IMR-90 (cell line): ENCODE measurements at regions of chr19 and their contacts with region 1.

Region 1: GRCh38 chr19:50511068-50511822 is at the start of gene JOSD2:
- DNase-seq: peak; percentile 99
- ATAC-seq: peak; percentile 95
- H3K4me3 ChIP-seq: peak within 1 kb of the TSS; percentile 68
- H3K27ac ChIP-seq: peak within 1 kb of the TSS; percentile 56
- H3K4me1 ChIP-seq: peaks cover 3% of the 10 kb centered on the region
- H3K27me3 ChIP-seq: no peaks in the 10 kb centered on the region
- CTCF ChIP-seq: no peak
- POLR2A ChIP-seq: peak; percentile 55; the same call in 1 of the 2 replicates
- RAD21 ChIP-seq: no peak
- total RNA-seq, gene JOSD2: 12.2 and 15.3 TPM in 2 replicates

Region 2: DNA sequence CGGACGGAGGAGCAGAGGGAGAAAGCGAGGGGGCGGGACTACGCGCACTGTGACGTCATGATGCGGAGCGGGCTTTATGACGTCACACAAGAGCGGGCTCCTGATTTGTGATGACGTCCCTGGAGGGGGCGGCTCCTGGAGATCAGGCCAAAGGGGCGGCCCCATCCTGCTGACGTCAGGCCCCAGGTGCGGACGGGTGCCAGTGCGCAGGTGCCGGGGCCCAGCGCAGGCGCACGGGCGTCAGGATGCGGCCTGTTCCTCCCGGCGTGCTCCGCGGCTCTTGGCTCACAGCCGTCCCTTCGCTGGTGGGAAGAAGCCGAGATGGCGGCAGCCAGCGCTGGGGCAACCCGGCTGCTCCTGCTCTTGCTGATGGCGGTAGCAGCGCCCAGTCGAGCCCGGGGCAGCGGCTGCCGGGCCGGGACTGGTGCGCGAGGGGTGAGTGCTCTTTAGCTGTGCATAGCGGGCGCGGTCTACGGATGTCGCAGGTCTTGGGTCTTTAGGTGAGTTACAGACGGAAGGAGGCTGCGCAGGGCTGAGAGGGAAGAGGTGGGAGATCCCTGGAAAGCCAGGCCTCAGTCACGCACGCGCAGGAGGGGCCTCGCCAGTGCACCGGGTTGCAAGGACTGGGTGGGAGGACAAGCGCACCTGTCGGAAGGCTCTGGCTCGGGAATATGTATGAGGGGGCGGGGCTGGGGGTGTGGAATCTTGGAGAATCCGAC is 34.9 kb before region 1 on chr19 and contains the starts of genes EMC10 and GARIN5A:
- CTCF ChIA-PET with region 1: no interaction called
- POLR2A ChIA-PET with region 1: no interaction called
- dilution Hi-C with region 1: no loop called
- in situ Hi-C with region 1: no loop called
- intact Hi-C with region 1: loop called (anchors 2 kb)
- DNase-seq: peak; percentile 94
- ATAC-seq: peak; percentile 94
- H3K4me3 ChIP-seq: peak within 1 kb of the TSS; percentile 87
- H3K27ac ChIP-seq: peak within 1 kb of the TSS; percentile 60; the same call in 1 of the 2 replicates
- H3K4me1 ChIP-seq: 0 out of 2 replicates have a peak, but pooled peaks cover 2% of the 10 kb centered on the region
- H3K27me3 ChIP-seq: no peaks in the 10 kb centered on the region
- CTCF ChIP-seq: no peak
- POLR2A ChIP-seq: peak; percentile 80
- RAD21 ChIP-seq: no peak
- total RNA-seq, gene EMC10: 11.3 and 12.2 TPM in 2 replicates
- total RNA-seq, gene GARIN5A: 0.28 TPM in 1 of 2 replicates, not detected in the other

Region 3: GRCh38 chr19:50486823-50487511 is 24.3 kb before region 1 on chr19:
- CTCF ChIA-PET with region 1: no interaction called
- POLR2A ChIA-PET with region 1: interaction called, 12 read pairs
- dilution Hi-C with region 1: no loop called
- in situ Hi-C with region 1: no loop called
- intact Hi-C with region 1: no loop called
- DNase-seq: peak; percentile 19
- ATAC-seq: no peak
- H3K4me3 ChIP-seq: no peak overlapping the region
- H3K27ac ChIP-seq: no peak overlapping the region
- H3K4me1 ChIP-seq: no peaks in the 10 kb centered on the region
- H3K27me3 ChIP-seq: peaks cover 29% of the 10 kb centered on the region
- CTCF ChIP-seq: peak; percentile 41
- POLR2A ChIP-seq: no peak
- RAD21 ChIP-seq: peak; percentile 33; the same call in 1 of the 2 replicates

Region 4: GRCh38 chr19:50724522-50725217 is 213.4 kb after region 1 on chr19:
- CTCF ChIA-PET with region 1: interaction called, 3 read pairs
- POLR2A ChIA-PET with region 1: no interaction called
- dilution Hi-C with region 1: no loop called
- in situ Hi-C with region 1: no loop called
- intact Hi-C with region 1: loop called (anchors 1 kb)
- DNase-seq: peak; percentile 99
- ATAC-seq: peak; percentile 86
- H3K4me3 ChIP-seq: peak overlapping the region; percentile 70
- H3K27ac ChIP-seq: peak overlapping the region; percentile 87
- H3K4me1 ChIP-seq: peaks cover 19% of the 10 kb centered on the region
- H3K27me3 ChIP-seq: no peaks in the 10 kb centered on the region
- CTCF ChIP-seq: peak; percentile 77
- POLR2A ChIP-seq: 0 out of 2 replicates have a peak, but pooled peaks have one; percentile 29
- RAD21 ChIP-seq: peak; percentile 38; the same call in 1 of the 2 replicates

Region 5: GRCh38 chr19:50804420-50805272 is 293.4 kb after region 1 on chr19:
- CTCF ChIA-PET with region 1: no interaction called
- POLR2A ChIA-PET with region 1: no interaction called
- dilution Hi-C with region 1: no loop called
- in situ Hi-C with region 1: no loop called
- intact Hi-C with region 1: loop called (anchors 1 kb)
- DNase-seq: peak; percentile 99
- ATAC-seq: peak; percentile 97
- H3K4me3 ChIP-seq: peak overlapping the region; percentile 61
- H3K27ac ChIP-seq: peak overlapping the region; percentile 98
- H3K4me1 ChIP-seq: peaks cover 3% of the 10 kb centered on the region; the same call in 1 of the 2 replicates
- H3K27me3 ChIP-seq: no peaks in the 10 kb centered on the region
- CTCF ChIP-seq: no peak
- POLR2A ChIP-seq: peak; percentile 99
- RAD21 ChIP-seq: no peak